Activated T-helper 2 cell treated with anti-CD3 and anti-CD28 coated beads, Interferon-gamma antibody, Interleukin-2, Interleukin-4, amounts not matched to agents 10 μg/mL and 5 μg/mL and 100 μg/mL, durations not matched to agents 14 hours and 24 hours and 36 hours (primary cell): ENCODE measurements at regions of chr3 and their contacts with region 1.

Region 1: DNA sequence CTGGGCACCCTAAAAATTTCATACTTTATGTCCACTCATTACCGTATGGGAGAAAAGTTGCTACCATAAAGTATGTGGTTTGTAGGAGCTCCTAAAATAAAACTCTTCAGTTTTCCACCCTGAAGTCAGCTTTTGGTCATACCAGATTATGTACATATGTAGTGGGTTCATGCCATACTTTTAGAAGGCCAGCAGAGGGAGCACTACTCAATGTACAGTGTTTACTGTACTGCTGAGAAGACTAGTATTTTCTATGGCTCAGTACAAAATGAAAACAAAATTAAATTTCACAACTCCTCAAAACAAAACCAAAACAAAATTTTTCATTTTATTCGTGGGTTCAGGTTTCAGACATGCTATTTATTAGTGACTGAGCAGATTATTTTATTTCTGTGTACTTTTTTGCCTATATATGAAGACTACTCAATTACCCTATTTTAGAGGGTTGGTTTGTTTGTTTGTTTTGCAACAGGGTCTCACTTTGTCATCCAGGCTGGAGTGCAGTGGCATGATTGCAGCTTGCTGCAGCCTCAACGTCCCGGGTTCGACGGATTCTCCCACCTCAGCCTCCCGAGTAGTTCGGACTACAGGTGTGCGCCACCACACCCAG is 24.3 kb downstream of the NXPE3 start:
- DNase-seq: no peak
- H3K4me3 Mint-ChIP-seq: no peak overlapping the region
- H3K27ac Mint-ChIP-seq: peak overlapping the region; percentile 30
- H3K4me1 Mint-ChIP-seq: peaks cover 16% of the 10 kb centered on the region
- H3K27me3 Mint-ChIP-seq: no peaks in the 10 kb centered on the region

Region 2: DNA sequence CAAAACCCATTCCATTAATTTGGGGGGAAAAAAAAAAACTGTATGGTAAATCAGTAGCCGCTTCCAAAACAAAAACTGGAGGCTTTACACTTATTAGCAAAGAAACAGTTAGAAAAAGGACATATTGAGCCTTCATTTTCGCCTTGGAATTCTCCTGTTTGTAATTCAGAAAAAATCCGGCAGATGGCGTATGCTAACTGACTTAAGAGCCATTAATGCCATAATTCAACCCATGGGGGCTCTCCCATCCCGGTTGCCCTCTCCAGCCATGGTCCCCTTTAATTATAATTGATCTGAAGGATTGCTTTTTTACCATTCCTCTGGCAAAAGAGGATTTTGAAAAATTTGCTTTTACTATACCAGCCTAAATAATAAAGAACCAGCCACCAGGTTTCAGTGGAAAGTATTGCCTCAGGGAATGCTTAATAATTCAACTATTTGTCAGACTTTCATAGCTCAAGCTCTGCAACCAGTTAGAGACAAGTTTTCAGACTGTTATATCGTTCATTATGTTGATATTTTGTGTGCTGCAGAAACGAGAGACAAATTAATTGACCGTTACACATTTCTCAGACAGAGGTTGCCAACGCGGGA is 107.4 kb before region 1 on chr3:
- intact Hi-C with region 1: loop called (anchors 5 kb)
- DNase-seq: no peak
- H3K4me3 Mint-ChIP-seq: no peak overlapping the region
- H3K27ac Mint-ChIP-seq: no peak overlapping the region
- H3K4me1 Mint-ChIP-seq: peaks cover 3% of the 10 kb centered on the region
- H3K27me3 Mint-ChIP-seq: no peaks in the 10 kb centered on the region

Region 3: DNA sequence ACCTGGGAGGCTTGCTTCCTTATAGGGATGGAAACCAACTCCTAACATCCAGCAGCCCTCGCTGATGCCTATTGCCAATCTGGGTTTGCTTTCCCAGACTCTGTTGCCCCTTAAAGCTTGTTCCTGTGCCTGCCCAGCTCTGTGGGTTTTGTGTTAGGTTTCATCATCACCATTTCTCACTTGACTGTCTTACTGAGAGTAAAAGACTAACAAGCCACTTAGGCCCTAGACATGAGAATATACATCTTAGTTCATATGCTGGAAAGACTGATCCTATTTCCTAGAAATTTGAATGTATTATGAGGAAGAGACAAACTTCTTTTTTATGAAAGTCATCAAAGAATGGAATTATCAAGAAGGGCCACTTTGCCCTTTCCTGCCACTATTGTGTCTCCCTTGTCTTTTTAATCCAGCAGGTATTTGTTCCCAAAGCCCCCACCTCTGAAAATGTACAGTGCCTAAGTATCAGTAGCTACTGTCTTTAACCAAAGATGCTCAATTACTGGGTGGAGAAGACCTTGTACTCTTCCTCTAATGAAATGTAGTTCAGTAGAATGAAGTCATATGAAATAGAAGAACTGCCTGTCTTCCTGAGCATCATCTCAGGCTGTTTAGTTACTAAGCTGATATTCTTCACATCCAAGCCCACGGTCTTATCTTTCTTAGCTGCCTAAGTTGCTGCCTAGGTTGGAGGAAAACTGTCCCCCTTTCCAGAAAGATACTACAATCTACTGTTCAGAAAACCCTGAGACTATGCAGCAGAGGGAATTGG is 571.8 kb after region 1 on chr3:
- intact Hi-C with region 1: loop called (anchors 10 kb)
- DNase-seq: no peak
- H3K4me3 Mint-ChIP-seq: no peak overlapping the region
- H3K27ac Mint-ChIP-seq: no peak overlapping the region
- H3K4me1 Mint-ChIP-seq: no peaks in the 10 kb centered on the region
- H3K27me3 Mint-ChIP-seq: no peaks in the 10 kb centered on the region

Region 4: DNA sequence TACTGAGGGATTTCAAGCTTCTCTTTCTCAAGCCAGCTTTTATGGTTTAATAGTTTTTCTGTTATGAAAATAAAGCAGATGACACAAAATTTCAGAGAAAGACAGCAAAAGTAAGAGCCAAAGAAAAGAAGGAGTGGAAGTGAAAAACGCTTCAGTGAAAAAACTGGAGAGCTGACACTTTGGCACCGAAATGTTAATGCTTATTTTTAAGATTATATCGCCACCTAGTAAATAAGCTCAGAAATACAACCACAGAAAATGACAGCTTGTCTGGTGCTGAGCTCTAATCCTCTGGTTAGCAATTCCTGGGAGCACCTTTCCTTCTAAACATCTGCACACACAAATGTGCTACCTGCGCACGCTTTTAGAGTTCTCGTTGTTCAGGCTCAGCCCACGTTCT is 733.2 kb after region 1 on chr3:
- intact Hi-C with region 1: loop called (anchors 5 kb)
- DNase-seq: no peak
- H3K4me3 Mint-ChIP-seq: no peak overlapping the region
- H3K27ac Mint-ChIP-seq: no peak overlapping the region
- H3K4me1 Mint-ChIP-seq: peaks cover 3% of the 10 kb centered on the region
- H3K27me3 Mint-ChIP-seq: no peaks in the 10 kb centered on the region